ENCODE measurements at regions of chr5 and their contacts with region 1.

Region 1: DNA sequence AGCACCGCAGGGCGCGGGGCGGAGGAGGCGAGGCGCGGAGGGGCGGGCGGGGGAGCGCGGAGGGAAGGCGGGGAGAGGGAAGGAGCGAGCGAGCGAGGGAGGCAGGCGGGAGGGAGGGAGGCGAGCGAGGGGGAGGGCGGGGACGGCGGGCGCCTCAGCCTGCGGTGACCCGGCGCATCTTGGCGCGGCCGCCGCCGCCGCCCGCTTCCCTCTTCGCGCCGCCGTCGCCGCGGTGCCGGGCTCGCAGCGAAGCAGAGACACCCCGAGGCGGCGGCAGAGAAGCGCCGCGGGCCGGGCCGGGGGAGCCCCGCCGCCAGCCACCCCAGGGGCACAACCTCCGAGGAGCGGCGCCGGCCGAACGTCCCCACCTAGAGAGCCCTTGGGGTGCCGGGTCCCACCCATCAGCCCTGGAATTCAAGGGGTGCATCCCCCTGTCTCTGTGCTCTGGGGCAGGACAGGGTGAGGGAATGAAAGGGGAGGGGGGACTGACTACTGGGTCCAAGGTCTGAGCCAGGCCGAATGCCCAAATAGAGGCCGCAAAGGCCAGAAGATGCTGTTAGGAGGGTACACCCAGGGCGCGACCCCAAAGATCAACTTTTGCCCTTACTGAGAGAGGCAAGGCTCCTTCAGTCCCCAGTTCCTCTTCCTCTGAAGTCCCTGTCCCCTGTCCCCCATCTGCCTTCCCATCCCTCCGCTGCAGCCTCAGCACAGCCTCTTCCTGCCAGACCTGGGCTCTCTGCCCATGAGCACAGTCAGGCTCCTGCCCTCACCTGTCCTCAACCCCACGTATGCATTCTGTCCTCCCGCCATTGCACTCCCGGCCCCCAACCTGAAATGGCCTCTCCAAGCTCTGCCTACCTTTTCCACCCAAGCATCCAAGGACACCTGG is at the start of gene ADAMTS2:
- DNase-seq: peak; percentile 35 to 60 (median 50)
- H3K4me3 ChIP-seq: peak within 1 kb of the TSS in 3 of 4 donors; percentile 30 to 64 (median 34)
- H3K27ac ChIP-seq: peak within 1 kb of the TSS in 4 of 5 donors; percentile 15 to 86 (median 56)
- H3K4me1 ChIP-seq: peaks cover 0 to 6% of the 10 kb centered on the region in 2 donors
- H3K27me3 ChIP-seq: peaks cover 10% of the 10 kb centered on the region
- CTCF ChIP-seq: no peak
- POLR2A ChIP-seq: no peak
- total RNA-seq, gene ADAMTS2: 4.3 to 70.3 (median 26.9) TPM

Region 2: GRCh38 chr5:179484761-179485160 is 139.1 kb after region 1 on chr5:
- intact Hi-C with region 1: no loop called
- DNase-seq: no peak
- H3K4me3 ChIP-seq: no peak overlapping the region
- H3K27ac ChIP-seq: no peak overlapping the region
- H3K4me1 ChIP-seq: peaks cover 0 to 5% of the 10 kb centered on the region in 2 donors
- H3K27me3 ChIP-seq: no peaks in the 10 kb centered on the region
- CTCF ChIP-seq: no peak
- POLR2A ChIP-seq: no peak

Region 3: DNA sequence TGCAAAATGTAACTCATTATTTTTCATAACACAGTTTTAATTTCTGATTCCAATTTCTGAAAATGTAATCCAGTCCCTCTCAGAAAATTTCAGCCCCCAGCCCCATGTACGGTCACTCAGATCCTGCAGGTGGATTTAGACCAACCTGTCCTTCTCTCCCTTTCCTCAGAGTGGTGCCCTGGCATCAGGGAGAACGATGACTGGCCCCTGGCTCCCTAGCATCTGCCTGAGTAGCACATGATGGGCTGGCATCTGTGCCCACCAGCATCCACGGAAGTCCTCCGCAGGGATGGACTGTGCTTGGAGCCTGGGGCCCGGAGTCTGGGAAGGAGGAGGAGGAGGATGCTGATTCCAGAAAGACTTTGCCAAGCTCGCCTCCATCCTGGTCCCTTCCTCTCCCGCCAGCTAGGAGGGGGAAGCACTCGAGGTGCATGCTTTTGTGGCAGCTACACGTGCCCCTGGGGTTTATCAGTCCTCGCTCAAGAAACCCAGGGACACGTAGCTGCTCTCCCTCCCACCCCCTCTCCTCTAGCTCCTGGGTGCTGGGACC is 150.3 kb after region 1 on chr5:
- intact Hi-C with region 1: loop called in 1 of 2 experiments (anchors 10 kb)
- DNase-seq: no peak
- H3K4me3 ChIP-seq: no peak overlapping the region
- H3K27ac ChIP-seq: no peak overlapping the region
- H3K4me1 ChIP-seq: no peaks in the 10 kb centered on the region
- H3K27me3 ChIP-seq: no peaks in the 10 kb centered on the region
- CTCF ChIP-seq: no peak
- POLR2A ChIP-seq: no peak